ENCODE measurements at regions of chr4 and their contacts with region 1.

Region 1: DNA sequence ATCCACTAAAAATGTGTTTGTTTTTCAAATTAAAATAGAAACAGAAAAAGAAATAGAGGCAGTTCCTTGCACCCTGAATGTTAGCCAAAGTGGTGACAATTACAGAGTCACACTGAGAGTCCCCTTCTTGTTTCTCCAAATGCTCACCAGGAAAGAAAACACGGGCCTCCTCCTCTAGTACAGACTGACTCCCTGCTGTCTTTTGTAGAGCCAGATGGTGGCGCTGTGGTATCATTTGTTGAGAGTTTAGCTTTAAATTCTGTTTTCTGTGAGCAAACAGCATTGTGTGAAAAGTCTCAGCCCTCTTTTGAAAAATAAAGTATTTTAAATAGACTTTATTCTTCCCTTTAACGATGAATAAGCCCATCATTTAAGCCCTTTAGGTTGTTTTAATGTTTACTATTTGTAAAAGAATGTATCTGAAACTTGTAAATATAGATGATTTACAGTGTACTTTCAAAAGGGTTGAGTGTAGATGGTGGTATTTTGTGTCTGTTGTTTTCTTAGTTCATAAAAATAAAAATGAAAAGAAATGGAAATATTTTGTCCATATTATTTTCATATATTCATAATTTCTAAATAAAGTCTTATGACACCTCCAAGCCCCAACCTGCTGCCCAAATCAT is 36.9 kb upstream of the ATOH1 start:
- DNase-seq: peak; percentile 68
- ATAC-seq: peak; percentile 86
- H3K4me3 Mint-ChIP-seq: no peak overlapping the region
- H3K27ac Mint-ChIP-seq: no peak overlapping the region
- H3K4me1 Mint-ChIP-seq: peaks cover 6% of the 10 kb centered on the region
- H3K27me3 Mint-ChIP-seq: no peaks in the 10 kb centered on the region; the same call in 1 of the 2 replicates
- CTCF ChIP-seq: peak; percentile 75

Region 2: DNA sequence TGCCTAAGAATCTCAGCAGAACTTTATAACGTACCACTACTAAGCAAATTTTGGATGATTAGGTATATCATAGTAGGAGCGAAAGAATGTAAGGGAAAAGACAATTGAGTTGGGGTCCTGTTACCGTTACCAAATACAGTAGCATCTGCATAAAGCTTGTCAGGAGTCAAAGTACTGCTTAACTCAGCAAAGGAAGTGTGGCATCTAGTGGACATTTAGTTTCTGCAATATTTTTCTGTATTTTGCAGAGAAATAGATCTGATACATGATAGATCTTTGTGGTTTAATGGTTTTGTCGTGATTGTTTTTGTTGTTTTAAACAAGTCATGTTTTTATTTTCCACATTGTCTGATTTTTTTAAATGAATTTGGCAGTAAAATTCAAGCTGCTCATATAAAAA is 335.0 kb after region 1 on chr4:
- CTCF ChIA-PET with region 1: interaction called, 10 read pairs
- POLR2A ChIA-PET with region 1: no interaction called
- DNase-seq: no peak
- ATAC-seq: peak; percentile 77
- H3K4me3 Mint-ChIP-seq: no peak overlapping the region
- H3K27ac Mint-ChIP-seq: no peak overlapping the region
- H3K4me1 Mint-ChIP-seq: peaks cover 5% of the 10 kb centered on the region; the same call in 1 of the 2 replicates
- H3K27me3 Mint-ChIP-seq: no peaks in the 10 kb centered on the region; the same call in 1 of the 2 replicates
- CTCF ChIP-seq: no peak